CD8-positive, alpha-beta memory T cell (primary cell): ENCODE measurements at regions of chr1 and their contacts with region 1.

Region 1: DNA sequence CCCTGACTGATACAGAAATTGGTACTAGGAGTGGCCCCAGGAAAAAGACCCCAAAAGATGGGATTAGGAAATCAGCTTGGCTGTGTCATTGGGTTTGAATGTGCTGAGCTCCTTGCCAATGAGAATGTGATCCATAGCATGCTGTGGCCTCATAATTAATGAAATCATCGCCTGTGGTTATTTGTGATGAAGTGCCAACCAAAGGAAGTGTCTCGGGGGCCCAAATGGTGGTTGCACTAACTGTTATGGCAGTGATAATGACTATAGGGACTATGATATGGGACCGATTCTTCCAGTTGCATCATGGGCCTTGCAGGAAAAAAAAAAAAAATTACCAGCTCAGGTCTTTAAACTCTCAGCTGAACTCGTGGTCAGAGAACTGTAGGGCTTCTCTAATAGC is 15.4 kb upstream of the ZDHHC18 start:
- DNase-seq: peak in 1 of 5 donors; percentile 60
- H3K4me3 ChIP-seq: no peak overlapping the region
- H3K4me3 Mint-ChIP-seq: peak overlapping the region; percentile 11 to 76 (median 55)
- H3K27ac ChIP-seq: no peak overlapping the region
- H3K27ac Mint-ChIP-seq: peak overlapping the region; percentile 59 to 96 (median 92)
- H3K4me1 ChIP-seq: peaks cover 11% of the 10 kb centered on the region
- H3K4me1 Mint-ChIP-seq: peaks cover 21% of the 10 kb centered on the region in 3 donors
- H3K27me3 ChIP-seq: no peaks in the 10 kb centered on the region
- H3K27me3 Mint-ChIP-seq: no peaks in the 10 kb centered on the region

Region 2: GRCh38 chr1:26602378-26602959 is 208.6 kb before region 1 on chr1:
- CTCF ChIA-PET with region 1: interaction called, 20 read pairs
- POLR2A ChIA-PET with region 1: interaction called, 3 read pairs
- DNase-seq: peak in 3 of 5 donors; percentile 30 to 61 (median 56)
- H3K4me3 ChIP-seq: no peak overlapping the region
- H3K4me3 Mint-ChIP-seq: no peak overlapping the region
- H3K27ac ChIP-seq: no peak overlapping the region
- H3K27ac Mint-ChIP-seq: no peak overlapping the region
- H3K4me1 ChIP-seq: peaks cover 8% of the 10 kb centered on the region
- H3K4me1 Mint-ChIP-seq: peaks cover 7 to 10% (median 9%) of the 10 kb centered on the region in 3 donors
- H3K27me3 ChIP-seq: no peaks in the 10 kb centered on the region
- H3K27me3 Mint-ChIP-seq: peaks cover 0 to 2% of the 10 kb centered on the region in 2 donors

Region 3: DNA sequence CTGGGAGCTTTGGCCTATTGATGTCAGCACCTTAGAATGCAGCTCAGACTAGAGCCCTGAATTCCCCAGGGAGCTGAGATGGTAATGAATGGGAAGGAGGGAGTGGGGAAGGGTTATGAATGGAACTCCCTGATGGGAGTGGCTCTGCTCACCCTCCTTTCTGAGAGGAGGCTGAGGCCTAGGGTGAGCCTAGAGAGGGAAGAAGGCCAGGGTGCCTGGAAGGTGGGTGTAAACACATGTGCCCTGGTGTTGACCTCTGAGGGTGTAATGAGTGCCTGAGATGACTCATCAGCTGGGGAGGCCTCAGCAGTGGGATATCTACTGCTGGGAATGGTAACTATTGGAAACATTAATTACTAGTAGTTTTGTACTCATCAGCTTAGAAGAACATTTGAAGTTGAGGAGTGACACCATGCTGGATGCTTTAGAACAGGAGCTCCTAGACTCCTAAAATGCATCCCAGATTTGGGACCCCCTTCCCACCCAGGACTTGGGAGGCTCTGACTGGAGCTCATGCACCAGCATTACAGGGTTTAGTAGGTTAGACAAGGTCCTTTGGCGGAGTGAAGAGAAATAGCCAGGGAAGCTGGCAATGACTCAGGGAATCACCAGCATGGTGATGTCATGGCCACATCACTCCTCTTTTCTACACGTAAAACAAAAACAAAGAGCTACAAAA is 39.3 kb before region 1 on chr1:
- CTCF ChIA-PET with region 1: no interaction called
- POLR2A ChIA-PET with region 1: no interaction called
- DNase-seq: no peak
- H3K4me3 ChIP-seq: no peak overlapping the region
- H3K4me3 Mint-ChIP-seq: no peak overlapping the region
- H3K27ac ChIP-seq: peak overlapping the region; percentile 11
- H3K27ac Mint-ChIP-seq: peak overlapping the region; percentile 63 to 91 (median 78)
- H3K4me1 ChIP-seq: no peaks in the 10 kb centered on the region
- H3K4me1 Mint-ChIP-seq: peaks cover 3 to 24% (median 12%) of the 10 kb centered on the region in 3 donors
- H3K27me3 ChIP-seq: no peaks in the 10 kb centered on the region
- H3K27me3 Mint-ChIP-seq: peaks cover 0 to 3% of the 10 kb centered on the region in 2 donors

Region 4: DNA sequence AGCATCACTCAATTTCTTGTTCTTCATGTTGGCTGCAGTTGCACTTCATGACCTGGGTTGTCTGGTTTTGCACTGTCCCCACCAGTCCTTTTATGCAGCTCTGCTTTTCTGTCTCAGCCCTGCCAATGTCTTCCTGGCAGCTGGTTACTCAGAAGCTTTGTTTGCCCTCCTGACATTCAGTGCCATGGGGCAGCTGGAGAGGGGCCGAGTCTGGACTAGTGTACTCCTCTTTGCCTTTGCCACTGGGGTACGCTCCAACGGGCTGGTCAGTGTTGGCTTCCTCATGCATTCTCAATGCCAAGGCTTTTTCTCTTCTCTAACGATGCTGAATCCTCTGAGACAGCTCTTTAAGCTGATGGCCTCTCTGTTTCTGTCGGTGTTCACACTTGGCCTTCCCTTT is 16.7 kb before region 1 on chr1:
- CTCF ChIA-PET with region 1: interaction called, 48 read pairs
- POLR2A ChIA-PET with region 1: no interaction called
- DNase-seq: no peak
- H3K4me3 ChIP-seq: no peak overlapping the region
- H3K4me3 Mint-ChIP-seq: no peak overlapping the region
- H3K27ac ChIP-seq: no peak overlapping the region
- H3K27ac Mint-ChIP-seq: peak overlapping the region in 3 of 8 donors; percentile 10 to 71 (median 51)
- H3K4me1 ChIP-seq: peaks cover 30% of the 10 kb centered on the region
- H3K4me1 Mint-ChIP-seq: peaks cover 40 to 64% (median 56%) of the 10 kb centered on the region in 3 donors
- H3K27me3 ChIP-seq: no peaks in the 10 kb centered on the region
- H3K27me3 Mint-ChIP-seq: no peaks in the 10 kb centered on the region

Region 5: GRCh38 chr1:26799479-26800142 is 11.4 kb before region 1 on chr1:
- CTCF ChIA-PET with region 1: interaction called, 48 read pairs
- POLR2A ChIA-PET with region 1: no interaction called
- DNase-seq: peak in 1 of 5 donors; percentile 55
- H3K4me3 ChIP-seq: peak overlapping the region; percentile 10
- H3K4me3 Mint-ChIP-seq: peak overlapping the region; percentile 4 to 83 (median 77)
- H3K27ac ChIP-seq: peak overlapping the region; percentile 65
- H3K27ac Mint-ChIP-seq: peak overlapping the region; percentile 94 to 98 (median 97)
- H3K4me1 ChIP-seq: peaks cover 37% of the 10 kb centered on the region
- H3K4me1 Mint-ChIP-seq: peaks cover 38 to 59% (median 55%) of the 10 kb centered on the region in 3 donors
- H3K27me3 ChIP-seq: no peaks in the 10 kb centered on the region
- H3K27me3 Mint-ChIP-seq: no peaks in the 10 kb centered on the region

Region 6: GRCh38 chr1:26864610-26865527 is 53.8 kb after region 1 on chr1:
- CTCF ChIA-PET with region 1: interaction called, 19 read pairs
- POLR2A ChIA-PET with region 1: interaction called, 4 read pairs
- DNase-seq: peak; percentile 91 to 95 (median 94)
- H3K4me3 ChIP-seq: peak overlapping the region; percentile 97
- H3K4me3 Mint-ChIP-seq: peak overlapping the region; percentile 88 to 97 (median 93)
- H3K27ac ChIP-seq: peak overlapping the region; percentile 83
- H3K27ac Mint-ChIP-seq: peak overlapping the region; percentile 73 to 98 (median 92)
- H3K4me1 ChIP-seq: peaks cover 11% of the 10 kb centered on the region
- H3K4me1 Mint-ChIP-seq: peaks cover 14 to 28% (median 27%) of the 10 kb centered on the region in 3 donors
- H3K27me3 ChIP-seq: no peaks in the 10 kb centered on the region
- H3K27me3 Mint-ChIP-seq: no peaks in the 10 kb centered on the region

Region 7: DNA sequence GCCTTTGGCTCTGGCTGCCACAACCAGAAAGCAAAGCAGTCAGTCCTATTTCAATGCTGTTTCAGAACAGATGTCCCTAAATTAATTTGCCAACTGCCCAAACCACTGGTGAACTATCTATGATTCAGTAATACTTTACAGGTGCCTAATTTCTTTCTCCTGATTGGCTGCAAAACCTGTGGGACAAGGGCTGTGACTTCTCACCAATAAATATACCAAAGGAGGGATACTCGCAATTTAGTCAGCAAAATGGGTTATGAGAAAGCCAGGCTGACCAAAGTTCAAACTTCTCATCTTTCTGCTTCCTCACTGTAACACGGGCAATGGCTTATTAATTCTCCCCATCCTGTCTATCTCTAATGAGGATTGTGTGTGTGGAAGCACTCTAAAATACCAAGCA is 66.3 kb after region 1 on chr1:
- CTCF ChIA-PET with region 1: interaction called, 17 read pairs
- POLR2A ChIA-PET with region 1: no interaction called
- DNase-seq: no peak
- H3K4me3 ChIP-seq: no peak overlapping the region
- H3K4me3 Mint-ChIP-seq: no peak overlapping the region
- H3K27ac ChIP-seq: no peak overlapping the region
- H3K27ac Mint-ChIP-seq: peak overlapping the region in 1 of 8 donors; percentile 61
- H3K4me1 ChIP-seq: no peaks in the 10 kb centered on the region
- H3K4me1 Mint-ChIP-seq: no peaks in the 10 kb centered on the region
- H3K27me3 ChIP-seq: no peaks in the 10 kb centered on the region
- H3K27me3 Mint-ChIP-seq: no peaks in the 10 kb centered on the region

Region 8: DNA sequence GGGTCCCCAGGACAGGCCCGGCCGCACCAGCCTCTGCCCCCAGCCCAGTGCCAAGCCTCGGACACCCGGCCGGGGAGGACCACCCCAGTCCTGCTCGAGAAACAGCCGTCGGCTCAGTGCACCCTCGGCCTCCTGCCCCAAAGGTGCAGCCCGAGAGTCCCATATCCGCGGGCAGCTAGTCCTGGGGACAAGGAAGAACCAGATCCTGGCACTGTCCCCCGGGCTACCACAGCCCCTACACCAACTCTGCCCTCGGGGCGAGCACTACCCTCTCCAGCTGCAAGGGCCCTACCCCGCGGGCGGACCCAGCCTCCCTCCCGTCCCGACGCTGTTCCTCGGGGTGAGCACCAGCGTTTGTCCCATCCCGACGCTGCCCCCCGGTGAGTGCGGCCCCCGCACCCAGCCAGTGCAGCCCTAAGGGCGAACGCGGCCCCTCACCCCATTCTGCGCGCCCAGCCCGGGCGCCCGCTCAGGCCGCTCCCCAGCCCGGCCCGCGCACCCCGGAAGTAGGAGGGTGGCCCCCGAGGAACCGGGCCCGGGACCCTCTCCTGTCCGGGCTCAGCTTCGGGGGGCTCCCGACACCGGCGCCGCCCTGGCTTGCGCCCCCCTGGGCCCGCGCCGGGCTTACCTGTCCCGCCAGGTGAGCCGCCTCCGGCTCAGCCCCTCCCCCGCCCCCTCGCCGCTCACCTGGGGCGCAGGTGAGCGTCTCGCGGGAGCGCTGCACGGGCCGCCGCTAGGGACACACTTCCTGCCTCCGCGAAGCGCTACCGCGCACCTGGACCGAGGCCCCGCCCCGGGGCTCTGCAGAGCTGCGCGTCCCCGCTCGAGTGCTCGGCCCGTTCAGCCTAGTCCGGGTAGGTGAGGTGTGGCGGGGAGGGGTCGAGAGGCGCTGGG is 148.9 kb after region 1 on chr1 and contains the start of gene KDF1:
- CTCF ChIA-PET with region 1: no interaction called
- POLR2A ChIA-PET with region 1: no interaction called
- DNase-seq: peak; percentile 35 to 77 (median 53)
- H3K4me3 ChIP-seq: peak within 1 kb of the TSS; percentile 51
- H3K4me3 Mint-ChIP-seq: peak within 1 kb of the TSS; percentile 79 to 94 (median 84)
- H3K27ac ChIP-seq: peak within 1 kb of the TSS; percentile 24
- H3K27ac Mint-ChIP-seq: peak within 1 kb of the TSS in 5 of 8 donors; percentile 40 to 87 (median 69)
- H3K4me1 ChIP-seq: peaks cover 6% of the 10 kb centered on the region
- H3K4me1 Mint-ChIP-seq: peaks cover 6 to 17% (median 8%) of the 10 kb centered on the region in 3 donors
- H3K27me3 ChIP-seq: no peaks in the 10 kb centered on the region
- H3K27me3 Mint-ChIP-seq: peaks cover 13 to 31% of the 10 kb centered on the region in 2 donors
- total RNA-seq, gene KDF1: 0.24 to 0.39 TPM